Lower lobe of right lung (tissue), 2 donors: ENCODE measurements at regions of chr17 and their contacts with region 1.

Region 1: DNA sequence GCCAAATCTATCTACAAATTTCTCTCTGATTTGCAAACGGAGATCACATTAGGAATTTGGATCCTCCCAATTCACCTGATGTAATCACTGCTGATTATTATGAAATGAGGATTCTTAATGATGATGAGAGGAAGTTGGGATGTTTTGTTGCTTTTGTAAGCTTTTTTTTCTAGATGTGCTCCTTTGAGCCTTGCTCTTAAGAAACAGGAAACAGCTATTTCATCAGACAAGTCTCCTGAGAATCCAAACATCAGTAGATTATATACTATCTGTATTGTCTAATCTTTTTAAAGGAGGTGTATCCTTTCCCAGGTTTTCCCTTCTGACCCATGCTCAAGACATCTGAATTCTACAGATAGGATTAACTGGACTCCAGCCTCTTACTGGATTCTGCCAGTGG is 73.3 kb downstream of the KIF2B start:
- DNase-seq: no peak
- ATAC-seq: no peak
- H3K4me3 ChIP-seq: no peak overlapping the region
- H3K27ac ChIP-seq: no peak overlapping the region
- H3K4me1 ChIP-seq: no peaks in the 10 kb centered on the region
- H3K27me3 ChIP-seq: no peaks in the 10 kb centered on the region
- CTCF ChIP-seq: no peak

Region 2: GRCh38 chr17:53837131-53837530 is 58.9 kb before region 1 on chr17:
- intact Hi-C with region 1: loop called (anchors 10 kb)
- DNase-seq: no peak
- ATAC-seq: no peak
- H3K4me3 ChIP-seq: no peak overlapping the region
- H3K27ac ChIP-seq: no peak overlapping the region
- H3K4me1 ChIP-seq: no peaks in the 10 kb centered on the region
- H3K27me3 ChIP-seq: no peaks in the 10 kb centered on the region
- CTCF ChIP-seq: no peak

Region 3: DNA sequence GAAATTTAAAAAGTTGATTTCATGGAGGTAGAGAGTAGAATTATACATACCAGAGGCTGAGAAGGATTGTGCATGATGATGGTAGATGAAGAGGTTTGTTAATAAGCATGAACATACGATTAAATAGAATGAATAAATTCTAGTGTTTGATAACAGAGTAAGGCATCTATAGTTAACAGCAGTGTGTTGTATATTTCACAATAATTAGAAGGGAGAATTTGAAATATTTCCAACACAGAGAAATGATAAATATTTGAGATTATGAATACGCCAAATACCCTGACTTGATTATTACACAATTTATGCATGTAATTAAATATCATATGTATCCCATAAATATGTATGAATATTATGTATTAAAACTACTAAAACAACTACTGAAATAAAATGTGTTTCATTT is 63.8 kb after region 1 on chr17:
- intact Hi-C with region 1: no loop called
- DNase-seq: no peak
- ATAC-seq: no peak
- H3K4me3 ChIP-seq: no peak overlapping the region
- H3K27ac ChIP-seq: no peak overlapping the region
- H3K4me1 ChIP-seq: no peaks in the 10 kb centered on the region
- H3K27me3 ChIP-seq: no peaks in the 10 kb centered on the region
- CTCF ChIP-seq: no peak

Region 4: DNA sequence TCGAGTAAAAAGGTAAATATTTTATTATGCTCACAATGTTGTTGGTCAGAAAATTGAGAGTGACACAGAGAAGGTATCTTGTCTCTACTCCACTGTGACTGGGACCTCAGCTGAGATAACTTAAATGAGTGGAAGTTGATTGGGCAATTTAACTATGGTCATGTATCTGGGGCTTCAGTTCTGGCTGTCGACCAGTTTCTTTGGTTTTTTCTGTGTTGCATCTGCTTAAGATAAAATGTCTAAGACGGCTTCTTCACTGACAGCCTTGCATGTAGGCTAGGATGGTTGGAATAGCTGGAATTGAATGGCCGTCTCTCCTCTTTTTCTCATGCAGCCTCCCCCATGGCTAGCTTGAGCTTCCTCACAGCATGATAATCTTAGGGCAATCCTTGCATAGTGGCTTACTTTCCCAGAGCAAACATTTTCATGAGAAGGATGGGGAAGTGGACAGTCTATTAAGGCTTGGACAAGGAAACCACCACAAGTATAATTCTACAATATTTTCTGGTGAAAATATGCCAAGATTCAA is 360.4 kb after region 1 on chr17:
- intact Hi-C with region 1: no loop called
- DNase-seq: no peak
- ATAC-seq: no peak
- H3K4me3 ChIP-seq: no peak overlapping the region
- H3K27ac ChIP-seq: no peak overlapping the region
- H3K4me1 ChIP-seq: no peaks in the 10 kb centered on the region
- H3K27me3 ChIP-seq: no peaks in the 10 kb centered on the region
- CTCF ChIP-seq: no peak